ENCODE measurements at regions of chr2 and their contacts with region 1.

Region 1: GRCh38 chr2:11829947-11830707 is 83.7 kb downstream of the LPIN1 start:
- DNase-seq: peak; percentile 98
- ATAC-seq: peak; percentile 85
- H3K4me3 ChIP-seq: peak overlapping the region; percentile 58
- H3K27ac ChIP-seq: peak overlapping the region; percentile 94
- H3K4me1 ChIP-seq: peaks cover 23% of the 10 kb centered on the region
- H3K27me3 ChIP-seq: no peaks in the 10 kb centered on the region
- CTCF ChIP-seq: peak; percentile 77

Region 2: DNA sequence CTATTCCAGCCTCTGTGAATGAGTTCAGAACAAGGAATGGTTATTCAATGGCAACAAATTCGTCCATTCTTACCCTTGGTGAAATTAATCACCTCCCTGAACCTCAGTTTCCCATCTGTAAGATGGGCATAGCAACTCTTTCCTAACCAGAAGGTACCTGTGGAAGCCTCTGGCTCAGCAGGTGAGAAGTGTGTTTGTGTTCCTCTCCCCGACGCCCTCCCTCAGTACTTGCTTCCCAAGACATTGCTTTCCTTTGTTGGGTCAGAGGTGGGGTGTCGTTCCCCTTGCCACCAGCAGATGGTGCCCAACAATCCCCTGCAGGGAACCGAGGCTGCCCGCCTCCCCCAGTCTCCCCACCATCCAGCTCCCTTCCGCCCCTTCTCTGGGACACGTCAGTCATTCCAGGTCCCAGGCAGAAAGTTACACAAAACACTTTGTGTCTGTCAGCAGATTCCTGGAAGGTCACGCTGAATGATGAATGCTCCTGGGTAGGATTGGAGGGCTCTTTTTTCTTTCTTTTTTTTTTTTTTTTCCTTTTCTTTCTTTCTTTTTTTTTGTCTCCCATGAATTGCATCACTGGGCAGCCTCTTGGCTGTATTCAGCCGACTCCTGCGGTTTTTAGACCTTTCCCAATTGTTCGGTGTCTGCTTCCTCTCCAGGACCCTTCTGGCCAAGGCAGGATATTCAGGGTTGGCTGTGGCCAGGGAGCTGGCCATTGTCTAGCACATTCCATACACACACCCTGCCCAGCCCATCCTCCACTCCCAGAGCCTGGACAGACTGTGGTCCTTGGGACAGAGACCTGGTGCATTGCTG is 33.6 kb after region 1 on chr2:
- CTCF ChIA-PET with region 1: interaction called, 6 read pairs
- POLR2A ChIA-PET with region 1: no interaction called
- intact Hi-C with region 1: loop called (anchors 1 kb)
- DNase-seq: peak; percentile 93
- ATAC-seq: peak; percentile 96
- H3K4me3 ChIP-seq: no peak overlapping the region
- H3K27ac ChIP-seq: peak overlapping the region; percentile 44
- H3K4me1 ChIP-seq: peaks cover 10% of the 10 kb centered on the region
- H3K27me3 ChIP-seq: no peaks in the 10 kb centered on the region
- CTCF ChIP-seq: peak; percentile 94

Region 3: DNA sequence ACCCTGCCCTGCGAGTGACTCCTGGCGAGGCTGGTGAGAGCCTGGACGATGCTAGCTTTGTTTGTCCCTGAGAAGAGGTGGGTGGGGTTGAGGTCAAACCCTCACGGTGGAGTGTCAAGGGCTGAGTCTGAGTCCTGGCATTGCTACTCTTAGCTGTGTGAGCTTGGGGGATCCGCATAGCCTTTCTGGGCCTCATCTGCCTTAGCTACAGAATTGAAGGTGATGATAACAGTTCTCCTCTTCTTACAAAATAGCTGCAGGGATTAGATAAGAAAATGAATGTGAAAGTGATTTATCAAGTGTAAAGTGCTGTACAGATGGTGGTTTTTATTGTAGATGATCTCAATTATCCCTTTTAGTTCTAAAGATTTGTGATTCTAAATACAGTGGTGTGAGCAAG is 60.9 kb after region 1 on chr2:
- CTCF ChIA-PET with region 1: no interaction called
- POLR2A ChIA-PET with region 1: no interaction called
- intact Hi-C with region 1: no loop called
- DNase-seq: no peak
- ATAC-seq: no peak
- H3K4me3 ChIP-seq: no peak overlapping the region
- H3K27ac ChIP-seq: no peak overlapping the region
- H3K4me1 ChIP-seq: no peaks in the 10 kb centered on the region
- H3K27me3 ChIP-seq: no peaks in the 10 kb centered on the region
- CTCF ChIP-seq: no peak

Region 4: DNA sequence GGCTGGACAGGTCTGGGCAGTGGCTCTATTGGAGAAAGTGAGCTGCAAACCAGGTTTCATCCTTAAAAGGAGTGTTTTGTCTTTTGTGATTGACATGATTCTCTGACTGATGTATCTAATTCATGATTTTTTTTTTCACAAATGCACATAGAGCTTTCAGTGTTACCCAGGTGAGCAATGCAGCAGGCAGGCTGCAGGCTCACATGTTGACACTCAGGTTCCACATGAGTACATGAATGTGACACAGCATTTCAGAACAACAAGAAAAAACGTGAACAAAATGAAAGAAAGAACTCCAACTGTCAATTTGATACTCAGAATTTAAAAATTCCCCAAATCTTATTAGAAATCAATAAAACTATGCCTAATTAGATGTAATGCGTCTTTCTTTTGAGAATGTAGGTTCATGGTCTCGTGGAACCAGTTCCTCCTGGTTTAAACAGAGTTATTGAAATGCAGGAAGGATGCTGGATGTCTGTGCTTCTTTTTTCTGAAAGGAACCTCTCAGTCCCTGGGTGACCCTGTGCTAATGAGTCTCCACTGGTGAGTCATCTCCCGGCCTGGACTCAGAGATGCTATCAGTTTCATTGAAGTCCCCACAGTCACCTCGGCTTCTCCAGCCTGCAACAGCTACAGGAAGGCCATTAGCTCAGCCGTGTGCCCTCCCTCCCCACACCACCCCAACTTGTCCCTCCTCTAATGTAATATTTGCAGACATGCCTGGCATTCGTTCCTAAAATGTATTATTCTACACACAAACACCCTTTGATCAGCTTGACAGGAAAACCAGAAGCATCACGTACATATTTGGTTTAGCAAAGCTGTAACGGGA is 346.7 kb after region 1 on chr2:
- CTCF ChIA-PET with region 1: interaction called, 3 read pairs
- POLR2A ChIA-PET with region 1: no interaction called
- intact Hi-C with region 1: loop called (anchors 1 kb)
- DNase-seq: peak; percentile 88
- ATAC-seq: peak; percentile 99
- H3K4me3 ChIP-seq: no peak overlapping the region
- H3K27ac ChIP-seq: peak overlapping the region; percentile 22
- H3K4me1 ChIP-seq: peaks cover 17% of the 10 kb centered on the region
- H3K27me3 ChIP-seq: no peaks in the 10 kb centered on the region
- CTCF ChIP-seq: no peak

Region 5: GRCh38 chr2:12320991-12321641 is 491.0 kb after region 1 on chr2:
- CTCF ChIA-PET with region 1: interaction called, 6 read pairs
- POLR2A ChIA-PET with region 1: interaction called, 11 read pairs
- intact Hi-C with region 1: loop called (anchors 1 kb)
- DNase-seq: peak; percentile 87
- ATAC-seq: peak; percentile 3; the same call in 1 of the 2 replicates
- H3K4me3 ChIP-seq: no peak overlapping the region
- H3K27ac ChIP-seq: peak overlapping the region; percentile 52
- H3K4me1 ChIP-seq: peaks cover 70% of the 10 kb centered on the region
- H3K27me3 ChIP-seq: no peaks in the 10 kb centered on the region
- CTCF ChIP-seq: peak; percentile 31; the same call in 1 of the 2 replicates

Region 6: GRCh38 chr2:12479065-12479601 is 649.0 kb after region 1 on chr2:
- CTCF ChIA-PET with region 1: no interaction called
- POLR2A ChIA-PET with region 1: no interaction called
- intact Hi-C with region 1: loop called (anchors 2 kb)
- DNase-seq: peak; percentile 38
- ATAC-seq: peak; percentile 66
- H3K4me3 ChIP-seq: no peak overlapping the region
- H3K27ac ChIP-seq: 0 out of 2 replicates have a peak overlapping the region, but pooled peaks have one; percentile 4
- H3K4me1 ChIP-seq: peaks cover 14% of the 10 kb centered on the region
- H3K27me3 ChIP-seq: no peaks in the 10 kb centered on the region
- CTCF ChIP-seq: no peak

Region 7: DNA sequence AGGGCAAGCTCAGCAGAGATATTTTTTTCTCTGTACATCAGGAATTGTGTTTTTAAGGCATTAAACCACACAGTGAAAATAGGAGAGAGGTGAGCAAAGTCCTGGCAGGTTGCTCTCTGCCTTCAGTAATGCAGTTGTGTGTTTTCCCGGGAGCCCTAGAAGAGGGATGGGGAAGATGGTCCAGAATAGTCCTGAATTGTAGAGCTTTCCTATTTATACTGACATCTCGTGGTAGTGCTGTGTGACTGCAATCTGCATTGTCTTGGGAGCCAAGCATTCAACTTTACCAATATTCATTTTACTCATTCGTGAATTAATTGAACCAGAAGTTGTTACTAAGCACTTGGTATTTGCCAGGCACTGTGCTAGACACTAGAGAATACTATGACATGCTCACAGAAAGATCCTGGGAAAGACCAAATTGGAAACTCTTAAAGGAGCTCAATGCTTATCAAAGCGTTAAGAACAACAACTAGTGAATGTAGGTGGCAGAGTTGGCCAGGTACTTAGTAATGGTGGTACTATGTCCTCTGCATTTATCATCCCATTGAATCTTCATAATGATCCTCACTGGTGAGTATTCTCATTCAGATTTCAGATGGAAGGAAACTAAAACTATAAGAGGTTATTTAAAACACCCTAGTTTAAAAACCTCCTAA is 1101.2 kb after region 1 on chr2:
- CTCF ChIA-PET with region 1: interaction called, 6 read pairs
- POLR2A ChIA-PET with region 1: no interaction called
- intact Hi-C with region 1: loop called (anchors 1 kb)
- DNase-seq: peak; percentile 67
- ATAC-seq: peak; percentile 16; the same call in 1 of the 2 replicates
- H3K4me3 ChIP-seq: no peak overlapping the region
- H3K27ac ChIP-seq: peak overlapping the region; percentile 97
- H3K4me1 ChIP-seq: peaks cover 33% of the 10 kb centered on the region
- H3K27me3 ChIP-seq: no peaks in the 10 kb centered on the region
- CTCF ChIP-seq: peak; percentile 94